ENCODE measurements at regions of chr12 and their contacts with region 1.

Region 1: DNA sequence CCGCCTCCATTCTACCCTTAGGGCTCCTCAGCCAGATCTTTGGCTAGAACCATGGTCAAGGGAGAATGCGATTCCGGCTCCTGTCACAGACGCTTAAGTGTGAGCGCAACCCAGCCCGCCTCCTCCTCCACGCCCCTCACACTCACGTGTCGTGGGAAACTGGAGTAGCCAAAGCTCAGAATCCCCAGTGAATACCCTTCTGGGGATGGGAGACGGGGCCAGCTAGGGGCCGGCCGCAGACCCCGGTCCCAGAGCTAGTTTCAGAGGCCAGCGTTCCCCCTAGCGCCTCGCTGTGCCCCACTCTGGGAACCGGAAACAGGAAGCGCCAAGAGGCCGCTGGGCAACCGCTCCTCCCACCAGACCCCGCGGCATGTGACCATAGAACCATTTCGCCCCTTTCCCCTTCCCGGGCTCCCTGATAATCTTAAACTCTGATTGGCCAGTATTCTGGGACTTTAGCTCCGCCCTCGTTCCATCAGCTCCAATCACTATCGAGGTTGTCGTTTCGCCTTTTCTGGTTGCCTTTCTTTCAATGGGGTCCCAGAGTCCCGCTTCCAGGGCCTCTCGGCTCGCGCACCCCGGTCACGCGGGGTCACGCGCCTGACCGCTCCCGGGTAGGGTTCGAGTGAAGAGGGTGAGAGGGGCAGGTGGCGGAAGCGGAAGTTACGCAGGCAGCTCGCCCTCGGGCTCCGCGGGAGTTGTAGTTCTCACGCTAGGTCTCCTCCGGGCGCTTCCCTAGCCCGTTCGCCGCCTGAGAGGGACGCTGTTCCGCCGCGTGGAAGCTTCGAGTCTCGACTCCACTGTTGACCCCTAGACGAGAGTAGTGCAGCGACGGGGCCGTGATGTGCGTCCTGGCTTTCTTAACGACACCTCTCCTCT is at the start of gene M6PR:
- DNase-seq: peak; percentile 91
- H3K4me3 Mint-ChIP-seq: peak within 1 kb of the TSS; percentile 100
- H3K27ac Mint-ChIP-seq: peak within 1 kb of the TSS; percentile 94
- H3K4me1 Mint-ChIP-seq: peaks cover 59% of the 10 kb centered on the region
- H3K27me3 Mint-ChIP-seq: no peaks in the 10 kb centered on the region
- total RNA-seq, gene M6PR: 161 and 175 TPM in 2 replicates

Region 2: DNA sequence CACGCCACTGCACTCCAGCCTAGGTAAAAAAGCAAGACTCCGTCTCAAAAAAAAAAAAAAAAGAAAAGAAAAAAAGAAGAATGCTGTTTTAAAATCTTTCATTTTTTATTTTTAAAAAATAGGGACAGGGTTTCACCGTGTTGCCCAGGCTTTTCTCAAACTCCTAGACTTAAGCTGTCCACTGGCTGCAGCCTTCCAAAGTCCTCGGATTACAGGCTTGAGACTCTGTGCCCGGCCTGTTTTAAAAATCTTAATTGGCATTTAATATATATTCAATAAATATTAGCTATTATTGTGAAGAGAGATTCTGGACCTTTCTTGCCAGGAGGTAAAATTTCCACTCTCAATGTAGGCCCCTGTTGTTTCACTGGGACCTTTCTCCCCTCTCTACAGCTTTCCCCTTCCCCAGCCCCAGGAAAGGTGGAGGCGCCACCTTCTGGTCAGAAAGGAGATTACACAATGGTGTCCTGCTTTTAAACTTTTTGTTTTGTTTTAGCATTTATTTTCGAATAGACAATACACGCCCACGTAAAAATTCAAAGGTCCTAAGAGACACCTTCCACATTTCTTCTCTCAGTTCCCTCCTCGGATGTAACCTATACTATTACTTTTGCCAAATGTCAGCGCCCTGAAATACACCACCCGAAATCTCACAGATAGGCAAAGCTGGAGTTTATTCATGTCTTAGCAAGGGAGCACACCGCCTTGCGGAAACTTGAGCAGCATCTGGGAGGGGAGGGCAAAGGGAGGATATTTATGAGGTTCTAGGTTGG is 59.1 kb before region 1 on chr12:
- intact Hi-C with region 1: loop called (anchors 1 kb)
- DNase-seq: peak; percentile 32
- H3K4me3 Mint-ChIP-seq: peak overlapping the region; percentile 78
- H3K27ac Mint-ChIP-seq: no peak overlapping the region
- H3K4me1 Mint-ChIP-seq: peaks cover 11% of the 10 kb centered on the region
- H3K27me3 Mint-ChIP-seq: peaks cover 14% of the 10 kb centered on the region

Region 3: DNA sequence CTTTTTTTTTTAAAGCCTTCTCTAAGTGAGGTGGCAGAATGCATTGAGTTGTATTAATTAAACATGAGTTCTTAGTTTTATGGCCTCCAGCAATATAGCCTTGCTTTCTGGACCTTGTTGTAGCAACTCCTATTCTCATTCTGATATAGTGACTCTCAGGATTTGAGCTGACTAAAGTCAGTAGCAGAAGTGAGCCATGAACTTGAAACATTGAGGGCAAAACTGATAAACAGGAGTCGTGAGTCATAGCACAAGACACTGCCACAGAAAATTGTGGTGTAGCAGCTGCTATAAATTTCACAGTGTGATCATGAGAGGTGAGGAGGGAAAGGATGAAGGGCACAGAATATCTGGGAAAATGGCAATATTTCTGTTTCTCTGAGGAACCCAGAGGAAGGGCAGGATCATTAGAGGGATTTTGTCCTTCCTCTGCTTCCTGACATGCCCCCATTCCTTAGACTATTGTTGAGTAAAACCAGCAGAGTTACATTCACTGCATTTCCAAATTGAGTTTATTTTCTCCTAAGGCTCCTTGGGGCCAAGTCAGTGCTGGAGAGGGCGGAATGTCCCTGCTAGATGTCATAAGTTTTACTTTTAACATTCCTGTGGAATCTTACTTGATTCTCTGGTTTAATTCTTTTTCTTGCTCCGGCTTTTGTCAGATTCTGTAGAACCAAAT is 47.2 kb after region 1 on chr12:
- intact Hi-C with region 1: loop called (anchors 1 kb)
- DNase-seq: no peak
- H3K4me3 Mint-ChIP-seq: no peak overlapping the region
- H3K27ac Mint-ChIP-seq: no peak overlapping the region
- H3K4me1 Mint-ChIP-seq: peaks cover 25% of the 10 kb centered on the region
- H3K27me3 Mint-ChIP-seq: peaks cover 34% of the 10 kb centered on the region

Region 4: GRCh38 chr12:9039397-9039977 is 89.9 kb after region 1 on chr12:
- intact Hi-C with region 1: loop called (anchors 1 kb)
- DNase-seq: no peak
- H3K4me3 Mint-ChIP-seq: no peak overlapping the region
- H3K27ac Mint-ChIP-seq: no peak overlapping the region
- H3K4me1 Mint-ChIP-seq: peaks cover 24% of the 10 kb centered on the region
- H3K27me3 Mint-ChIP-seq: peaks cover 21% of the 10 kb centered on the region

Region 5: GRCh38 chr12:10721651-10722501 is 1772.3 kb after region 1 on chr12:
- intact Hi-C with region 1: loop called (anchors 5 kb)
- DNase-seq: peak; percentile 49
- H3K4me3 Mint-ChIP-seq: peak overlapping the region; percentile 94
- H3K27ac Mint-ChIP-seq: peak overlapping the region; percentile 96
- H3K4me1 Mint-ChIP-seq: peaks cover 45% of the 10 kb centered on the region
- H3K27me3 Mint-ChIP-seq: peaks cover 24% of the 10 kb centered on the region

Measured in activated T-helper 2 cell treated with anti-CD3 and anti-CD28 coated beads, Interferon-gamma antibody, Interleukin-2, Interleukin-4, amounts not matched to agents 10 μg/mL and 5 μg/mL and 100 μg/mL, durations not matched to agents 14 hours and 24 hours and 36 hours (primary cell).